ENCODE measurements at regions of chr19 and their contacts with region 1.

Region 1: DNA sequence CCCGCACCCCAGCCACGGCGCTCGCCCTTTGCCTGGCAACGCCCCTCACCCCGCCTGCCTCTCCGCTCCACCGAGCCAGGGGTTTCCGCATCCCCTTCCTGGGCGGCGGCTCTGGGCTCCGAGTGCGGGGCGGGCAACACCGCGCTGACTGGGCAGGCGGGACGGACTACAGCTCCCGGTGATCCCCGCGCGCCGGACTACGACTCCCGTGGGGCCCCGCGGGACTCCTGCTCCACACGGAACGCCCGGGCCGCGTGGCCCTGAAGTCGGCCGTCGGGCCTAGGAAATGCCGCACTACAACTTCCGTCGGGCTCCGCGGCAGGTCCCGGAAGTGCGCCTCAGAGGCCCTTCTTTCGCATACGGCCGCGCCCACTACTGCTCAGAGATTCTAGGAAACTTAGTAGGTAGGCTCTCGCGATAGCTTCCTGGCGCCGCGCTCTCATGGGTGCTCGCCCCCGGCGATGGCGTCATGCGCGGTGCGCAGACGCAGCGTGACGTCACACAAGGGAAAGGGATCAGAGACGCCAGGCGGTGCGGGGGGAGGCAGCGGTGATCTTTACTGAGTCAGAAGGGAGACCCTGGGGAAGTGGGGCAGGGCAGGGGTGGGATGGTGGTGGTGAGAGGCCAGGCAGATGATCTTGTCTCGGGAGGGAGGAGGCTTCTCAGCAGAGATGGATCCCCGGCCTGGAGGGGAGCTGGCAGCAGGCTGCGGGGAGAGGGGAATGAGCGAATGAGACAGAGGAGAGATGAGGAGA is at the start of gene JOSD2:
- DNase-seq: peak; percentile 98
- ATAC-seq: peak; percentile 93 to 97 (median 94)
- H3K4me3 ChIP-seq: peak within 1 kb of the TSS; percentile 47 to 83 (median 74)
- H3K27ac ChIP-seq: peak within 1 kb of the TSS; percentile 8 to 91 (median 82)
- H3K4me1 ChIP-seq: peaks cover 5 to 27% (median 13%) of the 10 kb centered on the region in 9 donors
- H3K27me3 ChIP-seq: peaks cover 0 to 6% (median 0%) of the 10 kb centered on the region in 7 donors
- CTCF ChIP-seq: no peak
- total RNA-seq, gene JOSD2: 13.3 to 42.3 (median 25.2) TPM

Region 2: DNA sequence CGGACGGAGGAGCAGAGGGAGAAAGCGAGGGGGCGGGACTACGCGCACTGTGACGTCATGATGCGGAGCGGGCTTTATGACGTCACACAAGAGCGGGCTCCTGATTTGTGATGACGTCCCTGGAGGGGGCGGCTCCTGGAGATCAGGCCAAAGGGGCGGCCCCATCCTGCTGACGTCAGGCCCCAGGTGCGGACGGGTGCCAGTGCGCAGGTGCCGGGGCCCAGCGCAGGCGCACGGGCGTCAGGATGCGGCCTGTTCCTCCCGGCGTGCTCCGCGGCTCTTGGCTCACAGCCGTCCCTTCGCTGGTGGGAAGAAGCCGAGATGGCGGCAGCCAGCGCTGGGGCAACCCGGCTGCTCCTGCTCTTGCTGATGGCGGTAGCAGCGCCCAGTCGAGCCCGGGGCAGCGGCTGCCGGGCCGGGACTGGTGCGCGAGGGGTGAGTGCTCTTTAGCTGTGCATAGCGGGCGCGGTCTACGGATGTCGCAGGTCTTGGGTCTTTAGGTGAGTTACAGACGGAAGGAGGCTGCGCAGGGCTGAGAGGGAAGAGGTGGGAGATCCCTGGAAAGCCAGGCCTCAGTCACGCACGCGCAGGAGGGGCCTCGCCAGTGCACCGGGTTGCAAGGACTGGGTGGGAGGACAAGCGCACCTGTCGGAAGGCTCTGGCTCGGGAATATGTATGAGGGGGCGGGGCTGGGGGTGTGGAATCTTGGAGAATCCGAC is 34.9 kb before region 1 on chr19 and contains the starts of genes EMC10 and GARIN5A:
- intact Hi-C with region 1: loop called in 2 of 10 experiments (anchors 2 to 5 kb)
- DNase-seq: peak; percentile 91 to 92
- ATAC-seq: peak; percentile 91 to 98 (median 97)
- H3K4me3 ChIP-seq: peak within 1 kb of the TSS; percentile 72 to 100 (median 90)
- H3K27ac ChIP-seq: peak within 1 kb of the TSS in 9 of 10 donors; percentile 54 to 89 (median 75)
- H3K4me1 ChIP-seq: peaks cover 5 to 25% (median 19%) of the 10 kb centered on the region in 9 donors
- H3K27me3 ChIP-seq: no peaks in the 10 kb centered on the region
- CTCF ChIP-seq: no peak
- total RNA-seq, gene EMC10: 73.6 to 152 (median 88.9) TPM
- total RNA-seq, gene GARIN5A: 1.2 to 4.3 (median 2.0) TPM

Region 3: GRCh38 chr19:50804420-50805272 is 293.4 kb after region 1 on chr19:
- intact Hi-C with region 1: loop called in 1 of 10 experiments (anchors 10 kb)
- DNase-seq: peak; percentile 97 to 99
- ATAC-seq: peak; percentile 99 to 100 (median 99)
- H3K4me3 ChIP-seq: peak overlapping the region; percentile 69 to 99 (median 82)
- H3K27ac ChIP-seq: peak overlapping the region; percentile 91 to 99 (median 96)
- H3K4me1 ChIP-seq: peaks cover 7 to 26% (median 22%) of the 10 kb centered on the region in 9 donors
- H3K27me3 ChIP-seq: no peaks in the 10 kb centered on the region
- CTCF ChIP-seq: no peak

Measured in heart right ventricle (tissue), 16 donors.